Tibial artery (tissue), 4 donors: ENCODE measurements at regions of chr19 and their contacts with region 1.

Region 1: GRCh38 chr19:7535035-7535992 is at the start of gene PNPLA6:
- DNase-seq: peak; percentile 94 to 97
- H3K4me3 ChIP-seq: peak within 1 kb of the TSS; percentile 71 to 87
- H3K27ac ChIP-seq: peak within 1 kb of the TSS; percentile 87 to 97
- H3K4me1 ChIP-seq: peaks cover 0 to 19% (median 14%) of the 10 kb centered on the region in 4 donors
- H3K27me3 ChIP-seq: no peaks in the 10 kb centered on the region
- CTCF ChIP-seq: no peak

Region 2: DNA sequence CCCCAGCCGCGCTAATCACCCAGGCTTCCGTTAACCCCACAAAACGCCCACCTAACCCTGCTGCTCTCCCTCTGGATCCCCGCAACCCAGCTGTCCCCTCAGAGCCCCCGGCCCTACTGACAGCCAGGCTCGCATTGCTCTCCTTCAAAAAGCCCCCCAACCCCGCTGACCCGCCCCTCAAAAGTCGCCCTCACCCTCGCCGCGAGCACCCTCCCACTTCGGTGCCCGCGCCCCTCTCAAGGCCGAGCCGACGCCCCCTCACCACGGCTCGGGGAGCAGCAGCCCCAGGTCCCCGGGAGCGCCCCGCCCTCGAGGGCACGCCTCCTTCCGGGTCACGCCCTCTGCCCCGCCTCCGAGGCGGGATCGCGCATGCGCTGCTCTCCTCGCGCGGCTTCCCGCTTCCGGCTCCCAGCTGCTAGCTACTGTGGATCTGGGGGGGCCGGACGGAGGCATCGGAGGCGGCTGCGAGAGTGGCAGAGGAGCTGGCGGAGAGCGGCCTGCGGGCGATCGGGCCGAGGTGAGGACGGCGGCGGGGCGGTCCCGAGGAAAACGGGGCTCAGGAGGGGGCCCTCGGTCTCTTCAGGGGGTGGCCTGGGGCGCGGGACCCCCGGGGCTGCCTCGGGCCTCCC is 140.5 kb before region 1 on chr19:
- intact Hi-C with region 1: loop called (anchors 10 kb)
- DNase-seq: peak; percentile 84 to 93
- H3K4me3 ChIP-seq: peak overlapping the region; percentile 96 to 97
- H3K27ac ChIP-seq: peak overlapping the region; percentile 82 to 88
- H3K4me1 ChIP-seq: peaks cover 0 to 40% (median 22%) of the 10 kb centered on the region in 4 donors
- H3K27me3 ChIP-seq: no peaks in the 10 kb centered on the region
- CTCF ChIP-seq: no peak

Region 3: GRCh38 chr19:7488736-7489353 is 46.5 kb before region 1 on chr19 and contains the start of gene PEX11G:
- intact Hi-C with region 1: loop called (anchors 5 kb)
- DNase-seq: peak; percentile 83 to 94
- H3K4me3 ChIP-seq: peak within 1 kb of the TSS; percentile 57 to 70
- H3K27ac ChIP-seq: peak within 1 kb of the TSS; percentile 84 to 89
- H3K4me1 ChIP-seq: peaks cover 0 to 12% (median 9%) of the 10 kb centered on the region in 4 donors
- H3K27me3 ChIP-seq: no peaks in the 10 kb centered on the region
- CTCF ChIP-seq: no peak

Region 4: GRCh38 chr19:7500811-7501450 is 34.4 kb before region 1 on chr19:
- intact Hi-C with region 1: no loop called
- DNase-seq: no peak
- H3K4me3 ChIP-seq: peak overlapping the region; percentile 29 to 54
- H3K27ac ChIP-seq: no peak overlapping the region
- H3K4me1 ChIP-seq: peaks cover 0 to 17% (median 14%) of the 10 kb centered on the region in 4 donors
- H3K27me3 ChIP-seq: peaks cover 0 to 53% of the 10 kb centered on the region in 2 donors
- CTCF ChIP-seq: no peak